Right cardiac atrium (tissue), 5 donors: ENCODE measurements at regions of chr20 and their contacts with region 1.

Region 1: GRCh38 chr20:38221119-38221589 is 39.4 kb downstream of the KIAA1755 start:
- DNase-seq: peak; percentile 70 to 90 (median 89)
- ATAC-seq: peak; percentile 68
- H3K4me3 ChIP-seq: no peak overlapping the region
- H3K27ac ChIP-seq: no peak overlapping the region
- H3K4me1 ChIP-seq: no peaks in the 10 kb centered on the region
- H3K27me3 ChIP-seq: no peaks in the 10 kb centered on the region

Region 2: DNA sequence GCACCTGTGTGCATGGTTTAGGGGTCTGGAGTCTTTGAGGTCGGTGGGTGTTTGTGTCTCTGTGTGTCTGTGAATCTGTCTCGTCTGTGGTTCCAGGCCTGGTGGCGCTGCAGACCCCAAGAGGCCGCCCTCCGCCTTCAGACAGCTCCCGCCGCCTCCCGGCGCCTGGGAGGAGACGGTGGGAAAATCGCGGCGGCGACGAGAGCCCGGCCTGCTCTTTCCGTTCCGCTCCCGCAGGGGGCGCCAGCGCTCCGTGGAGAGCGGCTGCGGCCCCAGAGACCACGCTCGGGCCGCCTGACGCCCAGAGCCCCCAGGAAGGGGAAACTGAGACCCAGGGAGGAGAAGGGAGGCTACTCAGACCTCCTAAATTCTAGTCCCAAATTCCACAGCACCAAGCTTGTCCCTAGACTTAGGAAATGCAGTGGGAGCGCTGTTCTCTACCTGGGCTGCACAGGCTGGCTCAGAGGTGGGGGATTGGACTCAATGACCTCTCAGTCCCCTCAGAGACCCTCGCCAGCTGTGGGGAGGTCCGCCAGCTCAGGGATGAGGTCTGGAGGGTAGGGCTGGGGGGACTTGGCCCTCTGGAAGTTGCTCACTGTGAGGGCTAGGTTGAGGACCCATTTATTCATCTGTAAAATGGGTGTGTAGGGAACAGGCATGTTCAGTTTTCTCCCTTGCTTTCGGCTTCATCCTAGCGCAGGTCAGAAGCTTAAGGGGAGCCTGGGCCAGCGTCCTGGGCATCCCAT is 656.6 kb before region 1 on chr20:
- intact Hi-C with region 1: loop called in 2 of 4 experiments (anchors 10 kb)
- DNase-seq: peak; percentile 18 to 75 (median 73)
- ATAC-seq: peak; percentile 47 to 79
- H3K4me3 ChIP-seq: no peak overlapping the region
- H3K27ac ChIP-seq: no peak overlapping the region
- H3K4me1 ChIP-seq: no peaks in the 10 kb centered on the region
- H3K27me3 ChIP-seq: no peaks in the 10 kb centered on the region

Region 3: DNA sequence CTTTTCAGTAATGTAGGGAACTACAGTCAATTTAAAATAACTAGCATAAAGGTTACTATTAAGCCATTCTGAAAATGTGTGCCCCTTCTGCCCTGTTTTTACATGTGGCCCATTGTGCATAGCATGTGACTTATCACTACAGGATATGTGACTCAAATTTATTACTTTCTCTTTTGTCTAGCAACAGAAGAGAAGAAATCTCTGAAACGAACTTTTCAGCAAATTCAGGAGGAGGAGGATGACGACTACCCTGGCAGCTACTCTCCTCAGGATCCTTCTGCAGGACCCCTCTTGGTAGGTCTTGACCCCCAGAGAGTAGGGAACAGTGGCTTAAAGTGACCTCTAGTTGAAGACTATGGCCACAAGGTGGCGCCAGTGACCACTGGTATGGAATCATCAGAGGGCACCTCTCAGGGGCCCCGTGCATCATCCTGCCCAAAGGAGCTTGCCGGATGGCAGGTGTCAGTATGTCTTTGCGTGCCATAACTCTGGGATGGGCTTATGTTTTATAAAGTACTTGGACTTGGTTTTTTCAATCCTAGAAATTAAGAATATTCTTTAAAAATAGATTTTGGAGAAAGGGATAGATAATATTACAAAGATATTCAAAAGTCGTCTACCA is 163.7 kb before region 1 on chr20:
- intact Hi-C with region 1: loop called (anchors 2 to 5 kb)
- DNase-seq: peak; percentile 89 to 96 (median 92)
- ATAC-seq: peak; percentile 87 to 90
- H3K4me3 ChIP-seq: no peak overlapping the region
- H3K27ac ChIP-seq: no peak overlapping the region
- H3K4me1 ChIP-seq: no peaks in the 10 kb centered on the region
- H3K27me3 ChIP-seq: no peaks in the 10 kb centered on the region

Region 4: DNA sequence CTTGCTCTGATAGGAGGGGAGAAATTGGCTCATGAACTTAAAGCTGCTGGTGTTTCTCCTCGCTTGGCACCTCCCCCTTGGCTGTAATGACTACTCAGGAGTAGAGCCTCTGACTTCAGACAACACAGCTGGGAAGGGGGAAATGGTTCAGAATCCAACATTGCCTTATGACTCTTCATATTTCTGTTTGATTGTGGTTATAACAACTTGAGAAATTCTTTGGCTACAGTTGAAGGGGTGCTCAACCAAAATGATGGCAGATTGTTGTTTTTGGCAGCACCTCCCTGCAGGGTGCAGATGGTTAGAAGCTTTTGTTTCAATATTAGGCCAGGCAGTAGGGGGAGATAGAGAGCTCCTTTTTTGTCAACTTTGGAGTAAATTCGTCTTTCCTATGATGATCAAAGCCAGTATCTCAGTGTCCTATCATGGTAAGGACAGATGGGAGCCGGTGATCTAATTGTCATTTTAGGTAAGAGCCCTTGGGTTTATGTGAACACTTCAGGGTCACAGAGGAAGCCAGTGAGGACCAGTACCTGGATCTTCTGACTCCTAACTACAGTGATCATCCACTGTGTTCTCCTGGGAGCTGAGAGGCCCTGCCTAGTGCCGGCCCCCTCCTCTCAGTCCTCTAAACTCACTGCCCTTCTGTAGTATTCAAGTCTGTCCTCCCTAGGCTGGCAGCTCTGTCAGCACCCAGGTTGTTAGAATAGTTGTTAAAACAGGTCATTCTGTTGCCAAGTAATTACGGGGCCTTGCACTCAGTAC is 147.7 kb before region 1 on chr20:
- intact Hi-C with region 1: loop called in 1 of 4 experiments (anchors 5 kb)
- DNase-seq: peak; percentile 74 to 80 (median 74)
- ATAC-seq: peak; percentile 86 to 87
- H3K4me3 ChIP-seq: no peak overlapping the region
- H3K27ac ChIP-seq: peak overlapping the region; percentile 80
- H3K4me1 ChIP-seq: peaks cover 6% of the 10 kb centered on the region
- H3K27me3 ChIP-seq: no peaks in the 10 kb centered on the region

Region 5: GRCh38 chr20:38134387-38135270 is 86.5 kb before region 1 on chr20:
- intact Hi-C with region 1: no loop called
- DNase-seq: peak in 2 of 3 donors; percentile 68 to 76
- ATAC-seq: peak; percentile 4 to 51
- H3K4me3 ChIP-seq: no peak overlapping the region
- H3K27ac ChIP-seq: peak overlapping the region; percentile 87
- H3K4me1 ChIP-seq: peaks cover 11% of the 10 kb centered on the region
- H3K27me3 ChIP-seq: no peaks in the 10 kb centered on the region

Region 6: GRCh38 chr20:38165089-38165989 is 55.8 kb before region 1 on chr20 and contains the start of gene TGM2:
- intact Hi-C with region 1: loop called in 2 of 4 experiments (anchors 5 kb)
- DNase-seq: peak; percentile 90 to 95 (median 94)
- ATAC-seq: peak; percentile 84 to 85
- H3K4me3 ChIP-seq: peak within 1 kb of the TSS; percentile 79
- H3K27ac ChIP-seq: peak within 1 kb of the TSS; percentile 88
- H3K4me1 ChIP-seq: peaks cover 26% of the 10 kb centered on the region
- H3K27me3 ChIP-seq: no peaks in the 10 kb centered on the region
- total RNA-seq, gene TGM2: 963 to 1,731 (median 1,257) TPM

Region 7: GRCh38 chr20:38321959-38322598 is 100.9 kb after region 1 on chr20:
- intact Hi-C with region 1: loop called in 3 of 4 experiments (anchors 5 to 10 kb)
- DNase-seq: peak in 2 of 3 donors; percentile 53 to 76
- ATAC-seq: peak; percentile 62 to 64
- H3K4me3 ChIP-seq: no peak overlapping the region
- H3K27ac ChIP-seq: no peak overlapping the region
- H3K4me1 ChIP-seq: no peaks in the 10 kb centered on the region
- H3K27me3 ChIP-seq: no peaks in the 10 kb centered on the region

Region 8: DNA sequence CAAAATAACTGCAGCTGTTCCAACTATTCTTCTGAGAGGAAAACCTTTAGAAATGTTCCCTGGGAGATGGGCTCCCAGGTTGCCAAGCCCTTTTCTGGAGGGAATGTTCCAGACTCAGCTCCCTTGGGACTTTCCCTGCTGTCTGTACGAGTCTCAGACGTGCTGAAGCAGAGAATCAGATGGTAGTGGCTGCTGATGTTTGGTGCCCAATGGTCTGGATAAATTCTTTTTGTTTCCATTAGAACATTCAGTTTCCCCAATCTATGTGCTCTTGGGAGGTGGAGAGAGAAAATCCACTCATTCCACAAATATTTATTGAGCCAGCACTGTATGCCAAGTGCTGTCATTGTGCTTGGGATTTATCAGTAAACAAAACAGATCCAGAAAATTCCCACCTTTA is 174.0 kb after region 1 on chr20:
- intact Hi-C with region 1: loop called in 1 of 4 experiments (anchors 10 kb)
- DNase-seq: peak in 2 of 3 donors; percentile 28 to 67
- ATAC-seq: peak; percentile 84 to 87
- H3K4me3 ChIP-seq: no peak overlapping the region
- H3K27ac ChIP-seq: no peak overlapping the region
- H3K4me1 ChIP-seq: no peaks in the 10 kb centered on the region
- H3K27me3 ChIP-seq: no peaks in the 10 kb centered on the region

Region 9: DNA sequence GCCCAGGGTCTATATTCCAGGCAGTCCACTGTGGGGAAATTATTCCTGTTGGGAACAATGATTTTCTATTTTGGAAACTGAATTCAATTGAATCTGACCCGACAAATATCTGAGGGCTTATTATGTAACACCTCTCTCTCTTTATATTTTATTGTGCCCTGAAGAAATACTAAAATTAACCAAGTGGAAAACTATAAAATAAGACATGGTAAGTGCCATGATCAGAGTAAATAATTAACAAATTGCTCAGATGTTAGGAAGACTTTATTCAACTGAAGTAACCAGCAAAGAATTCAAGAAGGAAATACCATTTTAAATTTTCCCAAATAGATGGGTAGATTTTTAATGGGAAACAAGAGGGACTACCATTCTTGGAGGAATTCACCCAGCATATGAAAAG is 1835.0 kb after region 1 on chr20:
- intact Hi-C with region 1: no loop called
- DNase-seq: no peak
- ATAC-seq: no peak
- H3K4me3 ChIP-seq: no peak overlapping the region
- H3K27ac ChIP-seq: no peak overlapping the region
- H3K4me1 ChIP-seq: no peaks in the 10 kb centered on the region
- H3K27me3 ChIP-seq: no peaks in the 10 kb centered on the region